ENCODE measurements at regions of chr1 and their contacts with region 1.

Region 1: DNA sequence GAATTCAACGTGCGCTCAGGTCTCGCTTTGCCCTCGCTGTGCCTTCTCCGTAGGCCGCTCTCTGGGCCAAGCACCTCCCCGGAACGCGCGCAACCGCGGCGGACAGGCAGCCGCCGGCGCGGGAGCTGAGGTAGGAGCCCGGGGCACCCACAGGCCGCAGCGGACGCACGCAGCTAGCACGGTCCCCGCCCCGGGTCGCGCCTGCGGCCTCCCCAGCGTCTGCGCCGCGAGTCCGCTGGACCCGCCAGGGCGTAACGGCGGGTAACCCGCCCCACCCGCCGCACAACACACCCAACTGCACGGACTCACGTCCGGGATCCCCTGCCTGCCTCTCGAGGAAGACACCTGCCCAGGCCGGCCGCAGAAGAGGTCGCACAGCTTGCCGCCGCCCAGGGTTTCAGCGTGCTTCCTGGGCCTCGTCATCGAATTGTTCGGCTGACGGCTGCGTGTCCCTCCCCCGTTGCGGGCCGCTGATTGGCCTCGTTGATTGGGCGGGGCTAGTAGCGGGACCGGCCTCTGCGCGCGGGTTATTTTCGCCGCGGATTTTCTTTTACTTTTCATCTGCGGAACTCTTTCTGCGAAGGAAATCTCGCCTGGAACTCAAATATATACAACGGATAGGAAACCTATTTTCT is at the start of gene CLCC1:
- DNase-seq: peak; percentile 98
- ATAC-seq: peak; percentile 95
- H3K4me3 ChIP-seq: peak within 1 kb of the TSS; percentile 65
- H3K27ac ChIP-seq: peak within 1 kb of the TSS; percentile 91
- H3K4me1 ChIP-seq: peaks cover 9 to 14% of the 10 kb centered on the region in 2 experiments; a peak in 4 of 5 replicates
- H3K27me3 ChIP-seq: no peaks in the 10 kb centered on the region
- CTCF ChIP-seq: no peak
- EP300 ChIP-seq: peak; percentile 22; the same call in 1 of the 2 replicates
- POLR2A ChIP-seq: peak; percentile 96
- RAD21 ChIP-seq: peak in 1 of 2 experiments; percentile 21; a peak in 1 of 4 replicates
- polyA plus RNA-seq, gene CLCC1: 28.8 to 33.9 TPM

Region 2: GRCh38 chr1:108897865-108898720 is 65.1 kb before region 1 on chr1:
- CTCF ChIA-PET with region 1: no interaction called
- POLR2A ChIA-PET with region 1: no interaction called
- in situ Hi-C with region 1: no loop called
- intact Hi-C with region 1: no loop called
- DNase-seq: peak in 2 of 4 experiments; percentile 56 to 72
- ATAC-seq: peak; percentile 91
- H3K4me3 ChIP-seq: no peak overlapping the region
- H3K27ac ChIP-seq: no peak overlapping the region
- H3K4me1 ChIP-seq: no peaks in the 10 kb centered on the region
- H3K27me3 ChIP-seq: no peaks in the 10 kb centered on the region
- CTCF ChIP-seq: peak; percentile 61 to 94 (median 67); a peak in 5 of 6 replicates
- EP300 ChIP-seq: no peak
- POLR2A ChIP-seq: no peak
- RAD21 ChIP-seq: peak; percentile 89 to 96

Region 3: GRCh38 chr1:108913105-108913948 is 49.8 kb before region 1 on chr1:
- CTCF ChIA-PET with region 1: no interaction called
- POLR2A ChIA-PET with region 1: no interaction called
- in situ Hi-C with region 1: no loop called
- intact Hi-C with region 1: loop called (anchors 5 kb)
- DNase-seq: peak; percentile 24 to 88 (median 54)
- ATAC-seq: peak; percentile 93
- H3K4me3 ChIP-seq: no peak overlapping the region
- H3K27ac ChIP-seq: peak overlapping the region; percentile 57; the same call in 2 of the 3 replicates
- H3K4me1 ChIP-seq: peaks cover 11 to 13% of the 10 kb centered on the region in 2 experiments
- H3K27me3 ChIP-seq: no peaks in the 10 kb centered on the region
- CTCF ChIP-seq: no peak
- EP300 ChIP-seq: peak; percentile 83
- POLR2A ChIP-seq: no peak
- RAD21 ChIP-seq: 0 out of 4 replicates have a peak, but pooled peaks of 1 of the 2 experiments have one; percentile 24

Region 4: DNA sequence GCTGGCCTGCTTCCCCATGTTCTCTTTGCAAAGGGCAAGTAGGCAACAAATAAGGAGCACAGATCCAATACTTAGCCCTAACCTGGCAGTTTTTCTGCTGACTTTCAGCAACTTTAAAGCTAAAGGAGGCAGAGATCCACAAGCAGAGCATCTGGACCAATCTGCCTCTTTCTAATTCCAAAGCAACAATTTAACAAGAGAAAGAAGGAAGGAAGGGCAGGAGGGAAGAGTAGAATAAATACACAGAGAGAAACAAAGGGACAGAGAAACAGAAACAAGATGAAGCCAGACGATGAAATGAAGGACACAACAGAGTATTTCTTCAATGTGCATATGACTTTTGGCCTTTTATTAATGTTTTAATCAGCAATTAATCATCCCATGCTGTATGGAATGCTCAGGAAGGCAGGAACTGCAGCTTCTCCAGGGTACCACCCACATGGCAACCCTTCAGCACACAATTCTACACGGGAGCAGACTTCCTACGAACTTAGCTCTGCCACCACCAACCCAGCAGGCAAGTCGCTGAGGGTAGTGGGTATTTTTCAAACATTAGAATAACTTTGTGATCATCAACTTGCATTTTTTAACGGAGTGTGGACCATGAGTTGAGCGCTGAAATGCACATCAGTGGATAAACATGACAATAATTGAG is 15.2 kb before region 1 on chr1:
- CTCF ChIA-PET with region 1: no interaction called
- POLR2A ChIA-PET with region 1: interaction called, 36 read pairs
- in situ Hi-C with region 1: no loop called
- intact Hi-C with region 1: no loop called
- DNase-seq: no peak
- ATAC-seq: no peak
- H3K4me3 ChIP-seq: no peak overlapping the region
- H3K27ac ChIP-seq: no peak overlapping the region
- H3K4me1 ChIP-seq: no peaks in the 10 kb centered on the region
- H3K27me3 ChIP-seq: no peaks in the 10 kb centered on the region
- CTCF ChIP-seq: no peak
- EP300 ChIP-seq: no peak
- POLR2A ChIP-seq: no peak
- RAD21 ChIP-seq: no peak

Region 5: DNA sequence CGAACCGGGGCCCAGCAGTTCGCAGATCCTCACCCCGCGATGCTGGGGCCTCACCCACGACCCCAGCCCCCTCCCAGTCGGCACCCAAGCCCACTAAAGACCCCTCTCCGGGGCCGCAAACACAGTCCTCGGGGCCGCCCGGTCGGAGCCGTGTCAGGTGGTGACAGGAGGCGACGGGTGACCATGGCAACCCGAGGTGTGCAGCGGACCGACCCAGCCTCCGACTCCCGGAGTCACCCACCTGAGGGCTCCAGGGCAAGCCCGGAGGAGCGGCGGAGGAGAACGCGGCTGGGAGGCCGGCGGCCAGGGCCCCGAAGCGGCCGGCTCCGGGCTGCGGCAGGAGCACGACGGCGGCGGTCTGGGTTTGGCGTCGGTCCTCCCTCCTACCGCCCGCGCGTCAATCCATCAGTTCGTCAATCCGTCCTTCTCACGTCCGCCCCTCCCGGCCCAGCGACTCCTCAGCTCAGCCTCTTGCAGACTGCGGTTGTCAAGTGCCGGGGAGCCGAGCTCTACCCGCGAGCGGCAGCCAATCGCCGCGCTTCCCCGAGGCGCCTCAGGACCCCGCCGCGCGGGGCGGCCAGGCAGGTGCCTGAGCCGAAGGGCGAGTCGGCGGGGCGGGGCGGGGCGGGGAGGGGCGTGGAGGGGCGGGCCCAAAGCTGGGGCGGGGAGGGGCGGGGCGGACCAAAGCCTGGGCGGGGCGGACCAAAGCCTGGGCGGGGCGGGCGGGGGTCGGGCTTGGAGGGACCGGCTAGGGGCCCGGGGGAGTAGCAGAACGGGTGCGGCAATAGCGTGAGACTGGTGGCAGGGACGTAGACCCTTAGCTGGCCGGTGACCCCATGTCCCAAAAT is 78.7 kb after region 1 on chr1 and contains the start of gene WDR47:
- CTCF ChIA-PET with region 1: no interaction called
- POLR2A ChIA-PET with region 1: interaction called, 3 read pairs
- in situ Hi-C with region 1: no loop called
- intact Hi-C with region 1: loop called (anchors 5 kb)
- DNase-seq: peak; percentile 99
- ATAC-seq: peak; percentile 99
- H3K4me3 ChIP-seq: peak within 1 kb of the TSS; percentile 87
- H3K27ac ChIP-seq: peak within 1 kb of the TSS; percentile 63
- H3K4me1 ChIP-seq: peaks cover 8 to 12% of the 10 kb centered on the region in 2 experiments; a peak in 4 of 5 replicates
- H3K27me3 ChIP-seq: no peaks in the 10 kb centered on the region
- CTCF ChIP-seq: no peak
- EP300 ChIP-seq: no peak
- POLR2A ChIP-seq: peak; percentile 87
- RAD21 ChIP-seq: no peak
- polyA plus RNA-seq, gene WDR47: 1.3 to 2.0 TPM

Region 6: DNA sequence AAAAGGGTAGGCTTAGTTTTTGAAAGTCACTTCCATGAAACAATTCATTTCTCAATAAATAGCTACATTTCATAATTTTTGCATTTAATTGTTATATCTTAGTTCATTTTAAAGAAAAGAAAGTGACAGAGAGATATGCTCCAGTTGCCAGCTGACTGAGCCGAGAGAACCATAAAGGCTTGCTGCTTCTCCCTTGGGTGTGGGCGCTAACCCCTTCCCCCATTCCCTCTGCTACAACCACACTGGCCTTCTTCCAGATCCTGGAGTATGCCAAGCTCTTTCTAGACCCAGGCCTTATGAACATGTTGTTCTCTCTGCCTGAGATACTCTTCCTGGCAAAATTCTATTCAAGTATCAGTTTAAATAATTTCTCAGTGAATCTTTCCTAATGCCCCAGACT is 422.2 kb after region 1 on chr1:
- CTCF ChIA-PET with region 1: no interaction called
- POLR2A ChIA-PET with region 1: no interaction called
- in situ Hi-C with region 1: no loop called
- intact Hi-C with region 1: no loop called
- DNase-seq: no peak
- ATAC-seq: no peak
- H3K4me3 ChIP-seq: no peak overlapping the region
- H3K27ac ChIP-seq: peak overlapping the region; percentile 45
- H3K4me1 ChIP-seq: peaks cover 25 to 76% of the 10 kb centered on the region in 2 experiments
- H3K27me3 ChIP-seq: no peaks in the 10 kb centered on the region
- CTCF ChIP-seq: no peak
- EP300 ChIP-seq: no peak
- POLR2A ChIP-seq: no peak
- RAD21 ChIP-seq: no peak

Measured in K562 (cell line).